ENCODE measurements at regions of chr1 and their contacts with region 1.

Region 1: DNA sequence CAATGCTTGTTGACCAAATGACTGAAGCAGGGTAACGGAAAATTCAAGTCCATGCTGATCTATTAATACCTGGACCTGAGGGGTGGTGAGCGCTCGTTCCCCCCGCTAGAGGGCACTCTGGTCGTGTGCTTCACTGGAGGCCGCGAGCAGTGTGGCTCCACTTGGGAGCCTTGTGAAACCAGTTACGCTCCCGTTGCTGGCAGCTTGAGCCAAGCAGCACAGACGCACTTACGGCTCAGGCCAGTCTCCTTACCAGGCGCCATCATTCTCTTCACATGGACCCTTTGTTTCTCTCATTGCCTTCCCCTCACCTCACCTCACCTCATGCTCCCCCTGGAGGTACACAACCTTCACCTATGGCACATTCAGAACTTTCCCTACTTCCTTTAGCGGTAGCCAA is 49.7 kb upstream of the TSPAN2 start:
- DNase-seq: peak; percentile 64
- ATAC-seq: peak; percentile 89
- H3K4me3 Mint-ChIP-seq: no peak overlapping the region
- H3K27ac Mint-ChIP-seq: no peak overlapping the region
- H3K4me1 Mint-ChIP-seq: peaks cover 3% of the 10 kb centered on the region
- H3K27me3 Mint-ChIP-seq: peaks cover 18% of the 10 kb centered on the region

Region 2: GRCh38 chr1:115210302-115210711 is 71.3 kb after region 1 on chr1:
- CTCF ChIA-PET with region 1: no interaction called
- DNase-seq: no peak
- ATAC-seq: no peak
- H3K4me3 Mint-ChIP-seq: no peak overlapping the region
- H3K27ac Mint-ChIP-seq: no peak overlapping the region
- H3K4me1 Mint-ChIP-seq: no peaks in the 10 kb centered on the region
- H3K27me3 Mint-ChIP-seq: peaks cover 2% of the 10 kb centered on the region

Region 3: DNA sequence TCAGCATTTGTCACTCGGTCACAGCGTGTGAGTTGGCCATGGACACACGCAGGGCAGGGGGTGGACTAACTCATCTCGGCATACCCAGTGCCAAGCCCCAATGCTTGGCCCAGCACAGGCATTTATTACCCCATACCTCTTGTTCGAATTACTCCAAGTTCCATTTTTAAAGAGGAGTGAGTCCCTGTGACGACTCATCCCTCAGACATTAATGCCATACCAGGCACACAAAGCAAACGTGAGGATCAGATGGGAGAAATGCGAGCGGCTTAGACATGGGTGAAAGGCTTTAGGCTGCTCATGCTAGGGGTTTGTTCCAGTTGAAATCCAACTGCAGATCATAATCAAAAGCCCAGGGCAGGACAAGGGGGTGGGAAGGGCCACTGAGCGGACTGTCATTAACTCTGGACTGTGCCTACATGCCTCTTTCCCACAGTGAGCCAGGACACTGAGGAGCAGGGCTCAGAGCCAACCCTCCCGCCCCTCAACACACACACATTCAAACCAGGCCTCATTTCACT is 317.5 kb after region 1 on chr1:
- CTCF ChIA-PET with region 1: no interaction called
- DNase-seq: no peak
- ATAC-seq: no peak
- H3K4me3 Mint-ChIP-seq: no peak overlapping the region
- H3K27ac Mint-ChIP-seq: no peak overlapping the region
- H3K4me1 Mint-ChIP-seq: no peaks in the 10 kb centered on the region
- H3K27me3 Mint-ChIP-seq: no peaks in the 10 kb centered on the region

Region 4: DNA sequence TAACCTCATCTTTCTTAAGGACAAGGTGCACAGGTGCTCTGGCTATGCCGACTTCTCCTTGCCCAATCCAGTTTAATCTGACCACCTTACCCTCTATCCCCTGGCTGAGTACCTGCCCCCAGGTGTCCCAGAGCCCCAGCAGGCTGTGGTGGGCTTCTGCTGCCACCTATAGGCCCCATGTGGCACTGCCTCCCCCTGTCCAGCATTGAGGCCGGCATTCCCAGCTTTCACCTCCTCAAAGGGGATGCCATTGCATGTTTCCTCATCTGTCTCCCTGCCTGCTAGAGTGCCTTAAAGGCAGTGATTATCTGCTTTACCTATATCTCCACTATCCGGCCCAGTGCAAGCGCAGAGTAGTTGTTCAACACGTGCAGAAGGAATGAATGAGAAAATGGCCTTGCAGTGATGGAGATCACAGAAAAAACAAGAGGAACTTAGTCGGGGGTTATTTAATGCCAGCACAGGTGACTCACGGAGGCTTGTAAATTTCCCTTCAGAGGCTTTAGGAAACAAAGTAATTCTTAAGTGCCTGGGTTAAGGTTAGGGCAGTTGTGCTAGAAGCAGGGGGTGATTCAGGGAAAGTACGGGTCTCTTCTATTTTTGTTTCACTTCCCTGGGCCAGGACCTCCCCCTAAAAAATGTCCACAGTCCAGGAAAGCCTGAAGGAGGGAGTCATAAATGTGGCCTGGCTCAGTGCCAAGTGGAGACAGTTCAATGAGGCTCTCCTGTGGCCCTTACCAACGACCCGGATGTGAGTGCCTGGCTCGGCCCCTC is 330.9 kb after region 1 on chr1:
- CTCF ChIA-PET with region 1: interaction called, 10 read pairs
- DNase-seq: peak; percentile 43
- ATAC-seq: peak; percentile 39
- H3K4me3 Mint-ChIP-seq: no peak overlapping the region
- H3K27ac Mint-ChIP-seq: no peak overlapping the region
- H3K4me1 Mint-ChIP-seq: peaks cover 2% of the 10 kb centered on the region
- H3K27me3 Mint-ChIP-seq: no peaks in the 10 kb centered on the region

Region 5: GRCh38 chr1:115595279-115596079 is 456.5 kb after region 1 on chr1:
- CTCF ChIA-PET with region 1: interaction called, 13 read pairs
- DNase-seq: peak; percentile 76
- ATAC-seq: peak; percentile 57
- H3K4me3 Mint-ChIP-seq: no peak overlapping the region
- H3K27ac Mint-ChIP-seq: no peak overlapping the region
- H3K4me1 Mint-ChIP-seq: no peaks in the 10 kb centered on the region
- H3K27me3 Mint-ChIP-seq: peaks cover 4% of the 10 kb centered on the region

Measured in activated CD8-positive, alpha-beta memory T cell treated with anti-CD3 and anti-CD28 coated beads, Interleukin-2, amount 10 ng/mL, durations not matched to agents 7 days and 5 days (primary cell).